Heart right ventricle (tissue), 16 donors: ENCODE measurements at regions of chr20 and their contacts with region 1.

Region 1: DNA sequence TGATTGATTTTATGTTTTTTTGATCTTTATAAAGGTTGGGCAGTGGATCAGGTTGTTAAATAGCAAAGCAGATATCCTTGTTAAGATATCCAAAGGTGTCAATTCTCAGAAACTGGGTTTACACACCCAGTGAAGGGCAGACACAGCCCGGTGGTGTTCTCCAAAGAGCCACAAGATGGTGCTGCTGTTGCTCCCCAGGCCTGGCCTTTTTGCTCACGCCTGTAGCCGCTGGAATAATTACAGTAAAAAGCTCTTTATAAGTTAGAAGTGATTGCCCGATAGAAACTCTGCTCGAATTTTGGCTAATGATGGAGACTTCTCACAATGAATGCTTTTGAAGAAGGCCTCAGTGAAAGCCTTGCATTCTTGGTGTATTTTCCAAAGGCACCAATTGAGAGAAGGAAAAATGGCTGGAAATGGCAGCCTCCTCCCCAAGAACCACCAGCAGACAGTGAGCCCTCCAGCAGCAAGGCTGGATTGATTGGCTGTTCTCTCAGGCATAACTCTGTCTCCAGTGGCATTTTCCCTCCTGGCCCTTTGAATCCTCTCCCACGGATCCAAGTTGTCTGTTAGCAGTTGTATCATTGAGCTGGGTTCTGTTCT is 120.5 kb upstream of the CHD6 start:
- DNase-seq: peak; percentile 23 to 38
- ATAC-seq: peak in 7 of 8 donors; percentile 54 to 71 (median 66)
- H3K4me3 ChIP-seq: no peak overlapping the region
- H3K27ac ChIP-seq: no peak overlapping the region
- H3K4me1 ChIP-seq: no peaks in the 10 kb centered on the region
- H3K27me3 ChIP-seq: no peaks in the 10 kb centered on the region
- CTCF ChIP-seq: peak; percentile 42 to 87 (median 79)

Region 2: GRCh38 chr20:41086402-41087338 is 652.0 kb before region 1 on chr20:
- intact Hi-C with region 1: no loop called
- DNase-seq: no peak
- ATAC-seq: no peak
- H3K4me3 ChIP-seq: no peak overlapping the region
- H3K27ac ChIP-seq: peak overlapping the region in 1 of 10 donors; percentile 29
- H3K4me1 ChIP-seq: peaks cover 0 to 12% (median 0%) of the 10 kb centered on the region in 9 donors
- H3K27me3 ChIP-seq: no peaks in the 10 kb centered on the region
- CTCF ChIP-seq: no peak

Region 3: DNA sequence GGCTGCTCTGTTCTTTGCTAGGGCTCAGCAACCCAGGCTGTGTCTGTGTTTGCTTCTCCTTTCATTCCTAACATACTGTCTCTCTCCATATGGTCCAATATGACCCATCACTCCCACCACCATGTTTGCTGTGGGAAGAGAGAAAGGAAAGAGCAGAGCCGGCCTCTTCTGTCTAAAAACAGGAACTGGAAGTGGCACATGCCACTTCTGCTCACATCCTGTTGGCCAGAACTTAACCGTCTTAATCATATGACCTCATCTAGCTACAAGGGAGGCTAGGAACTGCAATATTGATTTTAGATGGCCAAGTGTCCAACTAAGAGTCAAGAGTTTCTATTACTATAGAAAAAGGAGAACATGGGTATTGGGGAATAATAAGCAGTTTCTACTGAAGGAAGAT is 92.0 kb after region 1 on chr20:
- intact Hi-C with region 1: no loop called
- DNase-seq: no peak
- ATAC-seq: no peak
- H3K4me3 ChIP-seq: no peak overlapping the region
- H3K27ac ChIP-seq: no peak overlapping the region
- H3K4me1 ChIP-seq: no peaks in the 10 kb centered on the region
- H3K27me3 ChIP-seq: peaks cover 0 to 43% (median 15%) of the 10 kb centered on the region in 7 donors
- CTCF ChIP-seq: no peak

Region 4: DNA sequence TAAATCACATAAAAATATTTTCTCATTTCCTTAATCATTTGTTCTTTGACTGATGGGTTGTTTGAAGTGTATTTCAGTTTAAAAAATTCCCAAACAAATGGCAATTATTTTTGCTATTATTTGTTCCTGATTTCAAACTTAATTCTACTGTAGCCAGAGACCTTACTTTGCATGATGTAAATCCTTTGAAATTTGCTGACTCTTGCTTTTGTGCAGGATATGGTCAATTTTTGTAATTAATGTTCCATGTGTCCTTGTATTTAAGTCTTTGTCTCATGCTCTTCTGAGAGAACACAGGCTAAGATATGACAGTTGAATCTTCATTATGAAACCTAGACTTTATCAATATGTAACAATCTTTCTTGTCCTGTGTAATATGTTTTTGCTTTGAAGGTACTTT is 174.4 kb after region 1 on chr20:
- intact Hi-C with region 1: no loop called
- DNase-seq: no peak
- ATAC-seq: no peak
- H3K4me3 ChIP-seq: no peak overlapping the region
- H3K27ac ChIP-seq: no peak overlapping the region
- H3K4me1 ChIP-seq: no peaks in the 10 kb centered on the region
- H3K27me3 ChIP-seq: peaks cover 0 to 7% (median 0%) of the 10 kb centered on the region in 7 donors
- CTCF ChIP-seq: no peak

Region 5: DNA sequence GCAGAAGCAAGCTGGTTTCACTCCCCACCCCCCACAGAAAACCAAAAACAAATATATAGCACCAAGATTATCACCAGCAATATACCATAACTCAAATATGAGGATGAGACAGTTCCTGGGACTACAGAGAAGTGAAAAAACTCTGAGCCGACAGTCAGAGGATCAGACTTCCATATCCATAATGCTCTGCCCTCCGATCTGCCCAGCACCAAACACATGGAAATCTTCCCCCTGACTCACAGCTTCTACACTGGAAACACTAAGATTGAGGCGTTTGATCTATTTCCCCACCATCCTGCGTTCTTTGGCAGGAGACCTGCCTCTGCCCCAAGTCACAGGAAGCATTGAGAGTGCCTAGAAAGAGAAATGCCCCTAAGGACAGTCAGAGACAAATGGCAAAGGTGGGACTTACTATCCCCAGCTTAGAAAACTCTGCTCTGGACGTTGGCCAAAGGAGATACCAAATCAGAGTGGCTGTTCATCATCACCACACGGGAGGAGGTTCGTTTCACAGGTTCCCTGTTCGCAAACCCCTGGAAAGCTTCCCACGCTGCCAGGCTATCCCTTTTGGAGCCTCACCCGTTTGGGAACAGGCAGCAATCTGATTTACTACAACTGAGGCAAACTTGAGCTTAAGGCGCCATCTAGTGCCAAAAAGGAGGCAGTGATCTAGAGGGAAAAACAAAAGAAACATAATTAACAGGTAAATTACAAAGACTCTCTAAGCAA is 1670.3 kb after region 1 on chr20:
- intact Hi-C with region 1: loop called in 2 of 10 experiments (anchors 10 kb)
- DNase-seq: no peak
- ATAC-seq: no peak
- H3K4me3 ChIP-seq: no peak overlapping the region
- H3K27ac ChIP-seq: no peak overlapping the region
- H3K4me1 ChIP-seq: no peaks in the 10 kb centered on the region
- H3K27me3 ChIP-seq: peaks cover 0 to 30% (median 4%) of the 10 kb centered on the region in 7 donors
- CTCF ChIP-seq: peak in 8 of 9 donors; percentile 8 to 50 (median 33)

Region 6: GRCh38 chr20:43416079-43416478 is 1677.4 kb after region 1 on chr20:
- intact Hi-C with region 1: loop called in 1 of 10 experiments (anchors 10 kb)
- DNase-seq: no peak
- ATAC-seq: no peak
- H3K4me3 ChIP-seq: no peak overlapping the region
- H3K27ac ChIP-seq: no peak overlapping the region
- H3K4me1 ChIP-seq: no peaks in the 10 kb centered on the region
- H3K27me3 ChIP-seq: peaks cover 0 to 5% (median 0%) of the 10 kb centered on the region in 7 donors
- CTCF ChIP-seq: no peak